ENCODE measurements at regions of chr16 and their contacts with region 1.

Region 1: DNA sequence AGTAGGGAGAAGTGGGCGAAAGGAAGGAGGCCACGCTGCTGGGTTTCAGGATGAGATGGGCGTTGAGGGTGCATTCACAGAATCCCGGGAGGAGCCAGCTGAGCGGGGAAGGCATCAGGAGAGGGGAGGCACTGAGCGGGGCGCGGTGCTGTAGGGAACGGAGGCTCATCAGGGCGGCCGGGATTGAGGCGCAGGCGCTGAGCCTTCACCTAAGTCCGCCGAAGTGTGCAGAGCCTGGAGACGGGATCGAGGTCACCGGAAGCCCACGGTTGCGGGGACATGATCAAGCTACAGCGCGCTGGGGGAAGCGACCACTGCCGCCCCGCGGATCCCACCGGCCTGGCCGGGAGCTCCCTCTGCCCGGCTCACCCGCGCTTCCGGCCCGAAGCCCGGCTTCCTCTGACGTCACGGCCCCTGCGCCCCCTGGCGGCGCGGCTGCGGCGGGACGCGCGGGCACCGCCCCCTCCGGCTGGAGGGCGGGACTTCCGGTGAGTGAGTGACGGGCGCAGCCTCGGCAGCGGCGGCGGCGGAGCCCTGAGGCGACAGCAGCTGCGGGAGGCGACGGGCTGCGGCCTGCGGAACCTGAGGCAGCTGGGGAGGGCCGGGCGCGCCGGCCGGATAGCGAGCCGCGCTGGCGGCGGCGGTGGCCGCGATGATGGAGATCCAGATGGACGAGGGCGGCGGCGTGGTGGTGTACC is at the start of gene MAPK8IP3:
- DNase-seq: no peak
- H3K4me3 ChIP-seq: peak within 1 kb of the TSS; percentile 99
- CTCF ChIP-seq: peak; percentile 72

Region 2: GRCh38 chr16:1677802-1678496 is 27.9 kb before region 1 on chr16 and contains the start of gene JPT2:
- CTCF ChIA-PET with region 1: interaction called, 39 read pairs
- POLR2A ChIA-PET with region 1: interaction called, 6 read pairs
- DNase-seq: peak; percentile 54
- H3K4me3 ChIP-seq: peak within 1 kb of the TSS; percentile 77
- CTCF ChIP-seq: no peak

Region 3: DNA sequence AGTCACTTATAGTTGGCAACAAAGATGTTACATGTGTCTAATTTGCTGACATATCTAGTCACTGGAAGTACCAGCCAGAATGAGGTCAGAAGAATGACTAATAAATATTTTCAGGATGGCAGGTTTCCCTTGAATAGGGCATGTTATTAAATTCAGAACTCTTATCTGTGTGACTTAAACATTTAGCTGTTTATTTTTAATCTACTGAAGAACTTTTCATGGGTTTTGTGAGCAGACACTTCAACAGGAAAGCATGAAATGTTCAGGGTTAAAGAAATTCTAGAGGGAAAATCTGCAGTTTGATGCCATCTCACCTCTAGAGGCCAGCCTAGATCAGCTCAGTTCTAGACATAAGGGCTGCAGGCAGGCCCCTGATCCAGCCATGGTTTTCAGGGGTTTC is 14.6 kb before region 1 on chr16:
- CTCF ChIA-PET with region 1: interaction called, 66 read pairs
- POLR2A ChIA-PET with region 1: interaction called, 4 read pairs
- DNase-seq: no peak
- H3K4me3 ChIP-seq: no peak overlapping the region
- CTCF ChIP-seq: no peak

Region 4: GRCh38 chr16:1745181-1745899 is 39.5 kb after region 1 on chr16:
- CTCF ChIA-PET with region 1: interaction called, 22 read pairs
- POLR2A ChIA-PET with region 1: no interaction called
- DNase-seq: peak; percentile 45
- H3K4me3 ChIP-seq: no peak overlapping the region
- CTCF ChIP-seq: no peak

Region 5: DNA sequence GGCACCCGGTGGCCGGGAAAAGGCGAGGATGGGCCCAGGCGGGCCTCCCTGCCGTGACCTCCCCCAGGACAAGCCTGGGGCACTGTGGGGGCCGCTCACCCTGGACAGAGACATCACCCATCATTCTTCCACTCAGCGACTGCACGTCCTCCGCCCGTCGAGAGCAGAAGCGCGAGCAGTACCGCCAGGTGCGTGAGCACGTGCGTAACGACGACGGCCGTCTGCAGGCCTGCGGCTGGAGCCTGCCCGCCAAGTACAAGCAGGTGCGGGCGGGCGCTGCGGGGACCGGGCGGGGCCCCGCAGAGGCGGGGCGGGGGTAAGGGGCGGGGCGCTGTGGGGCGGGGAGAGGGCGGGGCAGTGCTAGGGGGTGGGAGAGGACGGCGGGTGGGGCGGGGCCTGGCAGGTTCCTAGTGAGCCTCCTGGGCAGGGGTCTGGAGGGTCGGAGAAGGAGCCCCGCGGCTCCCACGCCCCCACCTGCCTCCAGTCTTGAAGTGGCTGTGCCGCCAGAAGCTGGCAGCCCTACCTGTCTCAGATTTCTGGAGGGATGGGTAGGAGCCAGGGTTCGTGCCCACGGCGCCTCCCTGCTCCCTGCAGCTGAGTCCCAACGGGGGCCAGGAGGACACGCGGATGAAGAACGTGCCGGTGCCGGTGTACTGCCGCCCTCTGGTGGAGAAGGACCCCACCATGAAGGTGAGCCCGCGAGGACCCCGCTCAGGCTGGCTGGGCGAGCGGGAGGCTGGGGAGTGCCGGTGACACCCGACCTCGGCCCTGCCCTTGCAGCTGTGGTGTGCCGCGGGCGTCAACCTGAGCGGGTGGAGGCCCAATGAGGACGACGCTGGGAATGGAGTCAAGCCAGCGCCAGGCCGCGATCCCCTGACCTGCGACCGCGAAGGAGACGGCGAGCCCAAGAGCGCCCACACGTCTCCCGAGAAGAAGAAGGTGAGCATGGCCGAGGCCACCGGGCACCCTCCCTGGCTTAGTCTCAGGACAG is 58.0 kb after region 1 on chr16:
- CTCF ChIA-PET with region 1: interaction called, 14 read pairs
- POLR2A ChIA-PET with region 1: no interaction called
- DNase-seq: no peak
- H3K4me3 ChIP-seq: no peak overlapping the region
- CTCF ChIP-seq: peak; percentile 61

Region 6: DNA sequence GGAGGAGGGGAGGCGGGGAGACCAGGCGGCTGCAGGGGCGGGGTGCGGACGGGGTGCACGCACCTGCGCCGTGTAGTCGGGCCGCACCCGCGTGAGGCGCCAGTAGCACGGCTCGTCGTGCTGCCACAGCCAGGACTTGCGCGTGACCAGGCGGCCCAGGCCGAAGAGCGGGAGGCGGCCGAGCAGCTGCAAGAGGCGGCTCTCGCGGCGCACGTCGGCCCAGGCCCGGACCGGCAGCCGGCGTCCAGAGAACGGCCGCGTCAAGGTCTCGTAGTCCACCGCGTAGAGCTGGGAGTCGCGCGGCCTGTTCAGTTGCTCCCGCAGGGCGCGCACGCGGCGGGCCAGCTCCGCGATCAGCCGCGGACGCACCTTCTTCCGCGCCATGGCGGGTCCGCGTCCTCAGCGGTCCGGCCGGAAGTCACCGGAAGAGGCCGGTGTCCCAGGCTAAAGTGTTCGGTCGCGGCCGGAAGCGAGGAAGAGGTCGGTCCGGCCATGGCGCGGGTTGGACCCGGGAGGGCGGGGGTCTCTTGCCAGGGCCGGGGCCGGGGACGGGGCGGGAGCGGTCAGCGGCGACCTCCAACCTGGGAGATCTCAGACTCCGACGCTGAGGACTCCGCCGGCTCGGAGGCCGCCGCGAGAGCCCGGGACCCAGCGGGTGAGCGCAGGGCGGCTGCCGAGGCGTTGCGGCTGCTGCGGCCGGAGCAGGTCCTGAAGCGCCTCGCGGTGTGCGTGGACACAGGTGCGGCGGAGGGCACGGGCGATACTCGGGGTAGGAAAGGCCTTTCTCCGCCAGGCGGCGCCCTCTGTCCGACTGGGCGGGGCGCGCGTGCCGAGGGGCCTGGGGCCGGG is 67.1 kb after region 1 on chr16 and contains the starts of genes EME2 and MRPS34:
- CTCF ChIA-PET with region 1: interaction called, 13 read pairs
- POLR2A ChIA-PET with region 1: interaction called, 4 read pairs
- DNase-seq: no peak
- H3K4me3 ChIP-seq: peak within 1 kb of the TSS; percentile 81
- CTCF ChIP-seq: peak; percentile 82

Region 7: GRCh38 chr16:1830213-1830612 is 124.4 kb after region 1 on chr16:
- CTCF ChIA-PET with region 1: no interaction called
- POLR2A ChIA-PET with region 1: no interaction called
- DNase-seq: no peak
- H3K4me3 ChIP-seq: no peak overlapping the region
- CTCF ChIP-seq: no peak

Region 8: DNA sequence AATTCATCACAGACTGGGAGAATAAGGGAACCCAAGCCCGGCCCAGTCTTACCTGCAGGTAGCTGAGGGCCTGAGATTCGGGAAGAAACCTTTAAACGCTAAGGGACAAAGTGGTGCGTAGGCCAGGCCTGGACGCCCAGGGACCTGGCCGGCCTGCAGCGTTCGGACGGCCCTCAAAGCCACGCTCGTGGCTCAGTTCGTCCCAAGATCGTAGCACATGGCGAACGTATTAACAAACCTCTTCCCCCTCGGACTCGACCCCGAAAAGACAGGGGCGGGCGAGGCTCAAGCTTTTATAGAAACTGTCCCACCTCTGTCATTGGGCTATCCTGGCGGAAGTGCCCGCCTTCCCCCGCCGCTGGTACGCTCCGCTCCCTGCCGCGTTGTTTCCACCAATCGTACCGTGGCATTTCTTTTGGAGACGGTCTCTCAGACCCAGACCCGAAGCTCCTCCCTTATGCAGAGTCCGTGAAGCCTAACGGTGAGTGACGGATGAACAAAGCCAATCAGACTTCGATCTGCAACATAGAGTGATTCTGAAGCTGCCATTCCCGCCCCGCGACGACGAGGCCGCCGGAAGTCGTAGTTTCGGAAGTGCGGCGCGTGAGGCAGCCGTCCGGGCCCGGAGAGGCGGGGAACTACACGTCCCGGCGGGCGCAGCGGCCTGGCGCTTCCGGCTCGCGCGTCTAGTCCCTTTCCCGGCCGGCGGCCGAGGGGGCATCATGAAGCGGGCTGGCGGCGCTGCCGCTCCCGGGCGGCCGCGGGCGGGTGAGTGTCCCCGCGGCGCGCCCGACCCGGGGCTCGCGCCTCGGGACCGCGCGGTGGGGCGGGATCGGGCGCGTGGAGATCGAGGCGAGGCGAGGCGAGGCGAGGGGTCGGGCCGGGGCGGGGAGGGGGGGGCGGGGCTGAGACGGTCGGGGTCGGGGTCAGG is 449.5 kb after region 1 on chr16 and contains the start of gene TRAF7:
- CTCF ChIA-PET with region 1: no interaction called
- POLR2A ChIA-PET with region 1: no interaction called
- DNase-seq: peak; percentile 100
- H3K4me3 ChIP-seq: peak within 1 kb of the TSS; percentile 99
- CTCF ChIP-seq: no peak

Region 9: DNA sequence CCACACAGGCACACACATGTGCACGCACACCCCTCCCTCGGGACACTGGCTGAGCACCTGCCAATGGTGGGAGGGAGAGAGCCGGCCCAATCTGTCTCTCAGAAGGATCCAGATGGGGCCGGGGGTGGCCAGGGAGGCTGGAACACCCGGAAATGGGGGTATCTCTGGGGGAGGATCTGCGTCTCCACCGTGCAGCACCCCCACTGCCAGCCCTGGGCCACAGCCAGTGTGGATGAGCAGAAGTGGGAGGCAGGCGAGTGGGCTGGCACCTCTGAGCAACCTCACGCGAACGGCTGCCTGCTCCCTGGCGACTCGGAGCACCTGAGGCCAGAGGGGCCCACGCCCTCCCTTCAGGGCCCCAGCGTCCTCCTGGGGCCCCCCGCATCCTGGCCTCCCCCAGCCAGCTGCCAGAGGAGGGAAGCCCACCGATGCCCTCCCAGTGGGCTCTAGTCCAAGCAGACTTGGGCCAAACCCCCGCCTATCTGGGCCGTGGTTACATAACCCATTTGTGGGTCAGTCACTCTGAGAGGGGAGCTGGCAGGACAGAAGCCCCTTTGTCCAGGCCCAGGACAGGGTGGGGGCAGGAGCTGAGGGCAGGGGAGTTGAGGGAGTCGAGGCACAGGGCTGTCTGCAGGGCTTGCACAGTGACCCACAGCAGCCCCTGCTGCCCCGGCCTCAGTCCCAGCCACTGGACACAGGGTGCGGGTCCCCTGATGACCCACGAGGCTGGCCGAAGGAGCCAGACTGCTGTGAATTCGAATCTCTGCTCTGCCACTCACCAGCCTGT is 485.0 kb after region 1 on chr16:
- CTCF ChIA-PET with region 1: no interaction called
- POLR2A ChIA-PET with region 1: no interaction called
- DNase-seq: no peak
- H3K4me3 ChIP-seq: no peak overlapping the region
- CTCF ChIP-seq: no peak

Measured in AG04449 (cell line).